ENCODE measurements at regions of chr9 and their contacts with region 1.

Region 1: DNA sequence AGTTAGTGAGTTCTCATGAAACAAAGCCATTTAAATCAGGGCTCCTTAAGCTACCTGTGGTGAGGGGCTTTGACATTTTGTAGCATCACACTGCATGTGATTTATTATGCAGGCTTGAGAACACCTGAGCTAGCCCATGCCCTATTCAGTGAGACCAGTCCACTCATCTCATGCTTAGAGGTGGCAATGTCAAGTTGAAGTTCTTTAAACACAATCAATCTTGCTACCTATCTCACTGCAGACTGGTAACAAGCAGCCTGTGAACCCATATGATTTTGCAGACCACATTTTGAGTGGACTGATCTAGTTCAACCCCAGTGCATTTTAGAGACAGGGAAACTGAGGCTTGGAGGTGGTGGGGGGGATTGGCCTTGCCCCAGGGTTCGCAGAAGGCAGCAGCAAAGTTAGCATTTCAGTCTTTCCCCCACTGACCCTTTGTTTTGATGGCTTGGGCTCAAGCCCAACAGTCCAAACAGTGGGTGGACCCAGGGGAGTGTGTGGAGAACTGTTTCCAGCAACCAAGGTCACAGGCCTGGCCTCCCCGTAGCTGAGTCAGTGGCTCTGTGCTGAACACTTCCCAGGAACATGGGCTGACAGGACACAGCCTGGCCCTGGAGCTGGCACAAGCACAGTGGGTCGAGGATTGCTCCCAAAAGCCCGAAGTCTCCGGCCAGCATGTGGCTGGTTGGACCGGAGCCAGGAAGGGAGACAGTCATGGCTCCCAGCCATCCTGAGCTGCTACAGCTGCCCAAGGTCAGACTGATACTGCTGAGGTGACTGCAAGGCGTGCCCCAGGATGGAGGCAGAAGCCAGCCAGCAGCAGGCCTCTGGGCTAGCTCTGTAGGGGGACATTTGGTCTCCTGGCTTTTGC is 95.3 kb downstream of the RGS3 start:
- DNase-seq: no peak
- CTCF ChIP-seq: no peak

Region 2: GRCh38 chr9:113572076-113572861 is 13.4 kb after region 1 on chr9:
- CTCF ChIA-PET with region 1: interaction called, 10 read pairs
- POLR2A ChIA-PET with region 1: no interaction called
- DNase-seq: no peak
- CTCF ChIP-seq: no peak